Activated CD8-positive, alpha-beta memory T cell treated with anti-CD3 and anti-CD28 coated beads, Interleukin-2, amount 10 ng/mL, durations not matched to agents 7 days and 5 days (primary cell): ENCODE measurements at regions of chr12 and their contacts with region 1.

Region 1: GRCh38 chr12:118187751-118188435 is 52.0 kb downstream of the PEBP1 start:
- DNase-seq: no peak
- ATAC-seq: no peak
- H3K4me3 Mint-ChIP-seq: no peak overlapping the region
- H3K27ac Mint-ChIP-seq: no peak overlapping the region
- H3K4me1 Mint-ChIP-seq: peaks cover 2% of the 10 kb centered on the region
- H3K27me3 Mint-ChIP-seq: no peaks in the 10 kb centered on the region

Region 2: GRCh38 chr12:118206107-118206412 is 18.2 kb after region 1 on chr12:
- CTCF ChIA-PET with region 1: no interaction called
- DNase-seq: no peak
- ATAC-seq: no peak
- H3K4me3 Mint-ChIP-seq: no peak overlapping the region
- H3K27ac Mint-ChIP-seq: peak overlapping the region; percentile 27
- H3K4me1 Mint-ChIP-seq: peaks cover 12% of the 10 kb centered on the region
- H3K27me3 Mint-ChIP-seq: no peaks in the 10 kb centered on the region

Region 3: DNA sequence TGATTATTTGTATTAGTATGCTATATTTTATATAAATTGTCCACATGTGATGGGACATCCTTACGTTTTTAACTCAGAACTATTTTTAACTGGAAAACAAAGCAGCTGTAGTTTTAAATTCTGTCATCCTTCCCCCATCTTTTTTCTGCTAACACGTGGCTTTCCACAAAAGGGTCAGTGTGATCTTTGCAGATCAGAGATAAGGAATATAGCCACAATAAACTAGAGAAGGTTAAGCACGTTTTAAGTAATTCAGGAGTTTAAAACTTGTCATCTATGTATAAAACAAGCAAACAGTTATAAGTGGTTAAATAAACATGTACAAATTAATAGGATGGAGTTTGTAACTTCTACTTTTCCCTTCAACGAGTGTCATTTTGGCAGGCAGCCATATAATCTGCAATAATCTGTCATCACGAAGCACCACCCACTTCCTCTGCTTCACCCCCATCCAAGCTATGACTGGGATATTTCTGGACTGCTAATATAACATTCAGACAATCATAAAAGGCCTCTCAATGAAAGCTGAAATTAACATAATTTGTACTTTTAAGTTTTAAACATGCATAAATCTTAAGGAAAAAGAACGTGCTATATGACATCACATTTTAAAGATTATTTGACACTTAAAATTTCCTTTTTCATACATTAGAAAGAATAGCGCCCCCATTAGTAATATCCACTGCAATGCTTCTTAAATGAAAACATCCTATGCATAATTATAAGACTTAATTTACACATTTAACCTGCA is 169.5 kb after region 1 on chr12:
- CTCF ChIA-PET with region 1: interaction called, 13 read pairs
- DNase-seq: peak; percentile 76
- ATAC-seq: peak; percentile 82
- H3K4me3 Mint-ChIP-seq: peak overlapping the region; percentile 89
- H3K27ac Mint-ChIP-seq: peak overlapping the region; percentile 93
- H3K4me1 Mint-ChIP-seq: peaks cover 42% of the 10 kb centered on the region
- H3K27me3 Mint-ChIP-seq: no peaks in the 10 kb centered on the region